Heart right ventricle (tissue), 16 donors: ENCODE measurements at regions of chr1 and their contacts with region 1.

Region 1: GRCh38 chr1:112964347-112964746 is 8.4 kb upstream of the SLC16A1 start:
- DNase-seq: no peak
- ATAC-seq: peak in 5 of 8 donors; percentile 62 to 87 (median 80)
- H3K4me3 ChIP-seq: no peak overlapping the region
- H3K27ac ChIP-seq: peak overlapping the region in 6 of 10 donors; percentile 21 to 69 (median 50)
- H3K4me1 ChIP-seq: peaks cover 0 to 24% (median 11%) of the 10 kb centered on the region in 9 donors
- H3K27me3 ChIP-seq: no peaks in the 10 kb centered on the region
- CTCF ChIP-seq: no peak

Region 2: DNA sequence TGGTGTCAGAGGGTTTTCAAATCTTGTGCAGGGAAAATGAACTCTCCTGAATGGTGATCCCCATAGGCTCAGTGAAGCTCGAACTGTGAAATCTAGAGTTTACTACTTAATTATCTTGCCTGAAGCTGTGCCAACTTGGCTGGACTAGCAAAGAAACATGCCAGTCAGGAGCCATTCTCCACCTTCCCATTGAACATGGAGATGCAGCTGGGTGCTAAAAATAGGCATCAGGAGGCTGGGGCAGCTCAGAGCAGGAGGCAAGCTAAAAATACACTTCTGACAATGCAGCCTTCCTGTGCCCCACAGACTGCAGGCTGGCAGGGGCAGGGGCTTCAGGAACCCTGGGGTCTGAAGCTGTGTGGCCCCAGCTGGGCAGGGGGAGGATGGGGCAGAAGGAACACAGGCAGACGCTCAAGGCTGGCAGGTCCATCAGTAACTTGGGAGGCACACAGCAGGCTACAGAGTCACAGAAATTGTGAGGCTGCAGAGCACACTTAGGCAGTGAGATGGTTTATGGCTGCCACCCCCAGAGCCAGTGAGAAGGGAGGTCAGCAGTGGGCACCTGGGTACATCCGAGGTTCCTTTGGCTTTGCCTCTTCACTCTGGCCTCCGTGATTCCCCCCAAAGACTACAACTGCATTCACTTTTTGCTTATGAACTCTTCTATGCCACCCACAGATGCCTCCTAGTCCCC is 819.5 kb before region 1 on chr1:
- intact Hi-C with region 1: no loop called
- DNase-seq: peak; percentile 18 to 32
- ATAC-seq: peak; percentile 86 to 97 (median 91)
- H3K4me3 ChIP-seq: no peak overlapping the region
- H3K27ac ChIP-seq: peak overlapping the region in 9 of 10 donors; percentile 20 to 74 (median 60)
- H3K4me1 ChIP-seq: peaks cover 0 to 40% (median 9%) of the 10 kb centered on the region in 9 donors
- H3K27me3 ChIP-seq: no peaks in the 10 kb centered on the region
- CTCF ChIP-seq: no peak

Region 3: GRCh38 chr1:113021430-113022086 is 57.2 kb after region 1 on chr1:
- intact Hi-C with region 1: loop called in 5 of 10 experiments (anchors 10 kb)
- DNase-seq: no peak
- ATAC-seq: peak in 4 of 8 donors; percentile 30 to 60 (median 52)
- H3K4me3 ChIP-seq: no peak overlapping the region
- H3K27ac ChIP-seq: peak overlapping the region in 4 of 10 donors; percentile 1 to 35 (median 28)
- H3K4me1 ChIP-seq: peaks cover 0 to 7% (median 0%) of the 10 kb centered on the region in 9 donors
- H3K27me3 ChIP-seq: no peaks in the 10 kb centered on the region
- CTCF ChIP-seq: no peak